ENCODE measurements at regions of chr5 and their contacts with region 1.

Region 1: GRCh38 chr5:138565100-138565821 is 9.9 kb downstream of the HSPA9 start:
- DNase-seq: no peak
- CTCF ChIP-seq: no peak

Region 2: DNA sequence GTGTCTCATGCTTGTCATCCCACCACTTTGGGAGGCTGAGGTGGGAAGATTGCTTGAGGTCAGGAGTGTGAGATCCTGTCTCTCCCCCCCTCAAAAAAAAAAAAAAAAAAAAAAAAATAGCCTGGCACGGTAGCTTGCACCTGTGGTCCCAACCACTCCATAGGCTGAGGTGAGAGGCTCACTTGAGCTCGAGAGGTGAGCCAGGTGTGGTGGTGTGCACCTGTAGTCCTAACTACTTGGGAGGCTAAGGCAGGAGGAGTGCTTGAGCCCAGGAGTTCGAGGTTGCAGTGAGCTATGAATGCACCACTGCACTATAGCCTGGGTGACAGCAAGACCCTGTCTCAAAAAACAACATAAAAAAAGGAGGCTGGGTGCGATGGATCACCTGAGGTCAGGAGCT is 12.6 kb before region 1 on chr5:
- CTCF ChIA-PET with region 1: interaction called, 11 read pairs
- POLR2A ChIA-PET with region 1: interaction called, 5 read pairs
- DNase-seq: no peak
- CTCF ChIP-seq: no peak

Region 3: DNA sequence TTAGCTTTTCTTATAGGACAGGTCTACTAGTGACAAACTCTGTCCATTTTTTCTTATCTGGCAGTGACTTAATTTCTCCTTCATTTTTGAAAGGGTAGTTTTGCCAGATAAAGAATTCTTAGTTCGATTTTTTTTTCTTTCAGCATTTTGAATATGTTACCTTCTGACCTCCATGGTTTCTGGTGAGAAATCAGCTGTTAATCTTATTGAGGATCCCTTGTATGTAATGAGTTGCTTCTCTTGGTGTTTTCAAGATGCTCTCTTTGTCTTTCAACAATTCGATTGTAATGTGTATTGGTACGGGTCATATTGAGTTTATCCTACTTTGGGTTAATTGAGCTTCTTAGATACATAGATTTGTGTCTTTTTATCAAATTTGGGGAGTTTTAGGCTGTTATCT is 788.9 kb after region 1 on chr5:
- CTCF ChIA-PET with region 1: no interaction called
- POLR2A ChIA-PET with region 1: interaction called, 12 read pairs
- DNase-seq: no peak
- CTCF ChIP-seq: no peak

Measured in GM10248 (cell line).